Mucosa of descending colon (tissue), 3 donors: ENCODE measurements at regions of chr20 and their contacts with region 1.

Region 1: DNA sequence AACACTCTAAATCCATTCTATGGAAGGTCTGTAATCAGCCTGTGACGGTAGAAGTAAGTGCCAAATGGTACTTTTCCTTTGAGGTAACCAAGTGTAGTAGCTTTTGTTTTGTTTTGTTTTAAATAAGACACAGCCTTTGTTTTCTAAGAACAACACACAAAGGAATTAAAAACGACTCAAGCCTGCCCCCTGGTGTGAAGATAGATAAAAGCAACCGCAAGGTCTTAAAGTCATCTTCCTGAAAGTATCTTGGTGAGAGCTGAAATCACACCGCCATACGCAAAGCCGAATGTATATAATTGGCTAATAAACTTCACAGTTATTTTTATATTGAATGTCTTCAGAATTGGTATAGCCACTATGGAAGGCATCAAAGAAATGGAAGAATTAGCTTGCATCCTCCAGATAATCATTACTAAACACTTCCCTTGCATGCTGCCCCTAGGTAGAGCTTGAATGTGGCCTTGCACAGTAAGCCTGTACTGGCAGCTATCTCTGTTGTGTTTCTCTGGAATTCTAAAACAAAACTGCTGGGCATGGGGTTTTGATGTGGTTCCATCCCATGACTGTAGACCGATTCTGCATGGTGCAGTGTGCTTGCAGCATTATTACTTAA is 95.6 kb downstream of the LAMP5 start:
- DNase-seq: peak in 1 of 3 donors; percentile 79
- ATAC-seq: peak; percentile 70
- H3K4me3 ChIP-seq: no peak overlapping the region
- H3K4me1 ChIP-seq: no peaks in the 10 kb centered on the region
- CTCF ChIP-seq: peak; percentile 34

Region 2: GRCh38 chr20:9407805-9408421 is 202.1 kb before region 1 on chr20:
- intact Hi-C with region 1: loop called (anchors 2 to 5 kb)
- DNase-seq: peak in 1 of 3 donors; percentile 83
- ATAC-seq: peak; percentile 82
- H3K4me3 ChIP-seq: no peak overlapping the region
- H3K4me1 ChIP-seq: no peaks in the 10 kb centered on the region
- CTCF ChIP-seq: peak; percentile 56